T-cell (primary cell): ENCODE measurements at regions of chr3 and their contacts with region 1.

Region 1: DNA sequence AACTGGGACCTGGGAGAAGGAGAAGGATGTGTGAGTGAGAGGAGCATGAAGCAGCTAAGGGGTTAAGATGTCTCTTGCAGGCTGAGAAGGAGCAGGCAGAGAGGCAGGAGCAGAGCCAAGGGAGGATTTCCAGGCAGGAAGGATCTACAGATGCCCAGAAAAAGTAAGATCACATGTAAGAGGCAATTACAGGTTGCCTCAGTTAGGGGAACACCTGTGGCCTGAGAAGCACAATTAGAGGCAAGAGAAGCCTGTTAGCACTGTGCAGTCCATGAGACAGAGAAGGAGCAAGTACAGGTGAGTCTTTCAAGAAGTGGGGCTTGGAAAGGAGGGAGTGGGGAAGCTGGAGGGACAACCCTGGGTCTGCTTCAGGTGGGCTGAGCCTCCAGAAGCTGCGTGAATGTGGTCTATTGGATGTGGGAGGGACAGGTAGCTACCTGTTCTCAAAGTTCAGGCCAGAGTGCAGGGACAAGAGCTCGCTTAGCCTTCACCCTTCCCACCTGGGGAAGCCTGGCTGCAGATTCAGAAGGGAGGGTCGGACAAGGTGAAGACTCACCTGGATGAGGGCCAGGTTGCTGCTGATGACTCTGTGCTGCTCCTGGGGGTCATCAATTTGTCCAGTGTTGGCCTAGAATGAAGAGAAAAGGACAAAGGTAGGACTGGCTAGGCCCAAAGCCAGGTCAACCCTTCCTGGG is 50.7 kb downstream of the SLC41A3 start:
- DNase-seq: no peak
- ATAC-seq: no peak
- H3K4me3 ChIP-seq: no peak overlapping the region
- H3K4me3 Mint-ChIP-seq: no peak overlapping the region
- H3K27ac ChIP-seq: no peak overlapping the region
- H3K27ac Mint-ChIP-seq: no peak overlapping the region
- H3K4me1 ChIP-seq: no peaks in the 10 kb centered on the region
- H3K4me1 Mint-ChIP-seq: peaks cover 0 to 8% (median 4%) of the 10 kb centered on the region in 3 donors
- H3K27me3 ChIP-seq: no peaks in the 10 kb centered on the region
- H3K27me3 Mint-ChIP-seq: no peaks in the 10 kb centered on the region

Region 2: DNA sequence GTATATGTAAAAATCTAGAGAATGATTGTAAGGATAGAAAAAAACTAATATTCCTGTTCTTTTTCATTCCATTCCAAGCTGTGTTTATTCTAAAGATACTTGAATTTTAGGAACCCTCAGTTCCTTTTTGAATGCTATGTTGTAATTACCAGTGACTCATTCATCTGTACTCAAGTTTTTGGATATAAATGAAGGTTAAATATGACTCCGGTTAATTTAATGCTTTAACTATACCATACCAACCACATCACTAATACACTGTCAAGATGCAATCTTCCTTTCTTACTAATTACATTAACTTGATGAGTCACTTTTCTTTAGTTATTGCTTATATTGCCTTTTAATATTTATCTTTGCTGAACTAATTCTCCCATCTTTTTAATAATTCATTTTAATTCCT is 589.3 kb before region 1 on chr3:
- CTCF ChIA-PET with region 1: no interaction called
- POLR2A ChIA-PET with region 1: no interaction called
- DNase-seq: no peak
- ATAC-seq: no peak
- H3K4me3 ChIP-seq: no peak overlapping the region
- H3K4me3 Mint-ChIP-seq: no peak overlapping the region
- H3K27ac ChIP-seq: no peak overlapping the region
- H3K27ac Mint-ChIP-seq: no peak overlapping the region
- H3K4me1 ChIP-seq: no peaks in the 10 kb centered on the region
- H3K4me1 Mint-ChIP-seq: no peaks in the 10 kb centered on the region
- H3K27me3 ChIP-seq: no peaks in the 10 kb centered on the region
- H3K27me3 Mint-ChIP-seq: no peaks in the 10 kb centered on the region

Region 3: DNA sequence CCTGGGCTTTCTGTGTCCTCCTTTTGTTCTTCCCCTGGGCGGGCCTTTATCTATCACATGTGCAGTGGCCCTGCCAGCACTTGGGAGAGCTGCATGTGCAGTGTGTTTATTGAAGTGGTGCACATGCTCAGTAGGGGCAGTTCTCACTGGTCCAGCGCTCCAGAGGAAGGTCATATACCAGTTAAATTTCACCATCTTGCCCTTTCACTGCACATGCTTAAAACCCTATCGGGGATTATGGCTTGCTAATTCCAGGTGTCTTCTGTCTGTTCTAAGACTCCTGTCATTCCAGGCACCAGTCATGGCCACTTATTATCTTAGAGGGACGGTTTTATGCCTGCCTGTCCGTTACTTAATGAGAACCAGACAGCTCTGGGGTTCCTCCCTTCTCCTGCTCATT is 12.0 kb before region 1 on chr3:
- CTCF ChIA-PET with region 1: no interaction called
- POLR2A ChIA-PET with region 1: interaction called in 1 of 2 experiments, 11 read pairs
- DNase-seq: no peak
- ATAC-seq: no peak
- H3K4me3 ChIP-seq: no peak overlapping the region
- H3K4me3 Mint-ChIP-seq: no peak overlapping the region
- H3K27ac ChIP-seq: no peak overlapping the region
- H3K27ac Mint-ChIP-seq: peak overlapping the region in 1 of 2 donors; percentile 36
- H3K4me1 ChIP-seq: peaks cover 0 to 8% of the 10 kb centered on the region in 2 experiments
- H3K4me1 Mint-ChIP-seq: peaks cover 0 to 4% (median 2%) of the 10 kb centered on the region in 3 donors
- H3K27me3 ChIP-seq: no peaks in the 10 kb centered on the region
- H3K27me3 Mint-ChIP-seq: no peaks in the 10 kb centered on the region